ENCODE measurements at regions of chr4 and their contacts with region 1.

Region 1: GRCh38 chr4:151195801-151196200 is 81.2 kb upstream of the PRSS48 start:
- DNase-seq: peak; percentile 44
- H3K4me3 Mint-ChIP-seq: peak overlapping the region; percentile 35
- H3K27ac Mint-ChIP-seq: peak overlapping the region; percentile 97
- H3K4me1 Mint-ChIP-seq: peaks cover 20% of the 10 kb centered on the region
- H3K27me3 Mint-ChIP-seq: no peaks in the 10 kb centered on the region
- CTCF ChIP-seq: no peak

Region 2: DNA sequence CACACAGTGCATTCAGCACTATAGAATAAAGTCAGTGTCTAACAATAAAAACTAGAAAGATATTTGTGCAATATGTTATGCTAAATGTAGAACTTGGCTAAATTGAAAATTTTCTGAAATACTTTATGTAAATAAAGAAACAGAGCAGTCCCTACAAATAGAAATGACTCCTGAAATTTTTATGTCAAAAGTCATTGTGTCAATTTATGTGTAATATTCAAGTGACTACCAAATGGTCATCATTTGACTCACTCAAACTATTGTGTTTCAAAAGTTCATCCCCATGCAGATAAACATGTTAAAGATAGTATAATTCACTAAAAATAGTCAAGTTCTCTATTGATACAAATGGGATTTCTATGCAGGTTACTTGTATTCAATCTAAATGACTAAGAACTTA is 198.7 kb before region 1 on chr4:
- CTCF ChIA-PET with region 1: no interaction called
- POLR2A ChIA-PET with region 1: no interaction called
- intact Hi-C with region 1: no loop called
- DNase-seq: no peak
- H3K4me3 Mint-ChIP-seq: no peak overlapping the region
- H3K27ac Mint-ChIP-seq: no peak overlapping the region
- H3K4me1 Mint-ChIP-seq: peaks cover 17% of the 10 kb centered on the region
- H3K27me3 Mint-ChIP-seq: no peaks in the 10 kb centered on the region
- CTCF ChIP-seq: no peak

Region 3: DNA sequence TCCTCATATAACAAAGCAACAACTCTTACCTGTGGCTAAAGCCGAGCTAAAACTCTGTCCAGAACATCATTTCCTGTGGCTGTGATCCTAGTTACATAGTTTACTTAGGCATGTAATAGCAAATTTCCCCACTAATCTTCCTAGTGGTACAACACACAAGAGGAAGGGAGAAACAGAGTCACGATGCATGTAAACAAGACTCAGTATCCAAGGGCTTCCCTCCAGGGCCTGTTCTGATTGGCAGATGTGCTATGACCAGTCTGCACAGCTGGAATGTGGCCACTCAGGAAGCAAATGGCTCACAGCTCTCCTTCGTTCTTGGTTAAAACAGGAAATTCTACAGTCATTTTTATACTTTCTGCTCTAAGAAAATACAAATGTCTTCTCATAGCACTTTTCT is 31.9 kb after region 1 on chr4:
- CTCF ChIA-PET with region 1: interaction called, 5 read pairs
- POLR2A ChIA-PET with region 1: interaction called, 20 read pairs
- intact Hi-C with region 1: no loop called
- DNase-seq: peak; percentile 69
- H3K4me3 Mint-ChIP-seq: peak overlapping the region; percentile 74
- H3K27ac Mint-ChIP-seq: peak overlapping the region; percentile 97
- H3K4me1 Mint-ChIP-seq: peaks cover 21% of the 10 kb centered on the region
- H3K27me3 Mint-ChIP-seq: no peaks in the 10 kb centered on the region
- CTCF ChIP-seq: no peak

Region 4: DNA sequence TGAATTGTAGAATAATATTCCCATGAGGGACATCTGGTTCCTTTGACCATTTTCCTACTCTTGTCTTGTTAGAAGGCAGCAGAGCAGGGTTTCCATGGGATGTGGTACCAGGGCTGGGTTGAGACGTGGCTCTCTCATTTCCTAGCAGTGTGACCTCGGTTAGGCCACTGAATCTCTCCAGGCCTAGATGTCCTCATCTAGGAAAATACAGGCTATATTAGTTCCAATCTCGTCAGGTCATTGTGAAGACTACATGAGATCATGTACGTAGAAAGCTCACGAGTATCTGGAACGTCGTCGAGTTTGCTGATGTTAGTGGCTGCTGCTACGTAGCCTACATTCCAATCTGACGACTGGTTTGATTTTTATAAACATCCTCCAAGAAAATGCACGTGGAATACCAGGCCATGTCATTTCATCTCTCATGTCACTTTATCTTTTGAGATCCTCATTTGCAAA is 843.3 kb after region 1 on chr4:
- CTCF ChIA-PET with region 1: no interaction called
- POLR2A ChIA-PET with region 1: no interaction called
- intact Hi-C with region 1: no loop called
- DNase-seq: no peak
- H3K4me3 Mint-ChIP-seq: no peak overlapping the region
- H3K27ac Mint-ChIP-seq: no peak overlapping the region
- H3K4me1 Mint-ChIP-seq: no peaks in the 10 kb centered on the region
- H3K27me3 Mint-ChIP-seq: no peaks in the 10 kb centered on the region
- CTCF ChIP-seq: no peak

Measured in MCF 10A (cell line).